ENCODE measurements at regions of chr19 and their contacts with region 1.

Region 1: GRCh38 chr19:33186431-33187182 is 7.5 kb upstream of the LRP3 start:
- DNase-seq: peak; percentile 34 to 51 (median 51)
- H3K4me3 ChIP-seq: peak overlapping the region in 3 of 7 experiments; percentile 13 to 40 (median 28)
- H3K27ac ChIP-seq: no peak overlapping the region
- H3K4me1 ChIP-seq: peaks cover 0 to 20% (median 10%) of the 10 kb centered on the region in 4 experiments
- H3K27me3 ChIP-seq: peaks cover 0 to 4% (median 0%) of the 10 kb centered on the region in 5 experiments

Region 2: GRCh38 chr19:33125929-33126388 is 60.6 kb before region 1 on chr19:
- CTCF ChIA-PET with region 1: interaction called, 27 read pairs
- POLR2A ChIA-PET with region 1: no interaction called
- DNase-seq: peak; percentile 60 to 81 (median 78)
- H3K4me3 ChIP-seq: no peak overlapping the region
- H3K27ac ChIP-seq: no peak overlapping the region
- H3K4me1 ChIP-seq: peaks cover 0 to 3% (median 0%) of the 10 kb centered on the region in 4 experiments
- H3K27me3 ChIP-seq: no peaks in the 10 kb centered on the region

Region 3: DNA sequence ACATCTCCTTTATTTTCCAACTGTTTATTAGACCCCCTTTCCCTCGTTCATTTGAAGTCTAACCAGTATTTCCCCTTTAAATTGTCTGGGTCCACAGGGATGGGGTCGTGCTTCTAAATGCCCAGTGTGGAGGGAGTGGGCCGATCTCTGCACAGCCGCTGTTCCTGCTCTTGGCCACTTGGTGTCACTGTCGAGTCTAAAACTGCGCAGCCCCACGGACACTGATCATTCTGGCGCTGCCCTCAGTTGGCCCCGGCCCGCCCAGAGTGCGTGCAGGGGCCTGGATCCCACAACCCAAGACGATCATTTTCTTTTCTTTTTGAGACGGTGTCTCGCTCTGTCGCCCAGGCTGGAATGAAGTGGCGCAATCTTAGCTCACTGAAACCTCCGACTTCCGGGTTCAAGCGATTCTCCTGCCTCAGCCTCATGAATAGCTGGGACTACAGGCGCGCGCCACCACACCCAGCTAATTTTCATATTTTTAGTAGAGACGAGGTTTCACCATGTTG is 42.7 kb before region 1 on chr19:
- CTCF ChIA-PET with region 1: interaction called, 40 read pairs
- POLR2A ChIA-PET with region 1: interaction called, 3 read pairs
- DNase-seq: peak; percentile 64 to 74 (median 73)
- H3K4me3 ChIP-seq: peak overlapping the region in 1 of 7 experiments; percentile 42
- H3K27ac ChIP-seq: no peak overlapping the region
- H3K4me1 ChIP-seq: peaks cover 0 to 4% (median 0%) of the 10 kb centered on the region in 4 experiments
- H3K27me3 ChIP-seq: peaks cover 0 to 1% (median 0%) of the 10 kb centered on the region in 5 experiments

Region 4: GRCh38 chr19:33260628-33261418 is 74.2 kb after region 1 on chr19:
- CTCF ChIA-PET with region 1: no interaction called
- POLR2A ChIA-PET with region 1: no interaction called
- DNase-seq: peak; percentile 87 to 98 (median 96)
- H3K4me3 ChIP-seq: peak overlapping the region in 4 of 7 experiments; percentile 3 to 30 (median 16)
- H3K27ac ChIP-seq: peak overlapping the region in 1 of 2 experiments; percentile 27
- H3K4me1 ChIP-seq: peaks cover 0 to 60% (median 48%) of the 10 kb centered on the region in 4 experiments
- H3K27me3 ChIP-seq: peaks cover 0 to 2% (median 0%) of the 10 kb centered on the region in 5 experiments

Region 5: DNA sequence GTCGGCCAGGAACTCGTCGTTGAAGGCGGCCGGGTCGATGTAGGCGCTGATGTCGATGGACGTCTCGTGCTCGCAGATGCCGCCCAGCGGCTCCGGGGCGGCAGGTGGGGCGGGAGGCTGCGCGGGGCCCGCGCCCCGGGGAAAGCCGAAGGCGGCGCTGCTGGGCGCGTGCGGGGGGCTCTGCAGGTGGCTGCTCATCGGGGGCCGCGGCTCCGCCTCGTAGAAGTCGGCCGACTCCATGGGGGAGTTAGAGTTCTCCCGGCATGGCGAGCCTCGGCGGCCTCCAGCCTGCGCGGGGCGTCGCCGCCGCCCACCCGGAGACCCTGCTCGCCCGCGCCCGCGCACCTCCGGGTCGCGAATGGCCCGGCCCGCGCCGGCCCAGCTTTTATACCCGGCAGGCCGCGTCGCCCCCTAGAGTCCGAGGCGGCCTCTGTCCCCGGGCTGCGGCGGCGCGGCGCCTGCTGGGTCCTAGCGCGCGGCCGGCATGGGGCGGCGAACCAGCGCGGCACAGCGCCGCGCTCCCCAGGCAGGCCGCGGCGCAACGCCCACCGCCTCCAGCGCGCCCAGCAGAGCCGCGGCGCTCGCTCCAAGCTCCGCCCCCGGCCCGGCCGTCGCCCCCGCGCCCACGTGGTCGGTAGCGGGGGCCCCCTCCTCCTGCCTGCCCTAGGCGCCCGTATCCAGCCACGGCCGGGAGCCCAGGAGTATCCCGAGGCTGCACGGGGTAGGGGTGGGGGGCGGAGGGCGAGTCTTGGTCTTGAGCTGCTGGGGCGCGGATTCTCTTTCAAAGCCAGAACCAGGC is 115.8 kb after region 1 on chr19 and contains the start of gene CEBPA:
- CTCF ChIA-PET with region 1: no interaction called
- POLR2A ChIA-PET with region 1: no interaction called
- DNase-seq: peak; percentile 90 to 95 (median 94)
- H3K4me3 ChIP-seq: peak within 1 kb of the TSS; percentile 50 to 89 (median 76)
- H3K27ac ChIP-seq: peak within 1 kb of the TSS in 1 of 2 experiments; percentile 61
- H3K4me1 ChIP-seq: peaks cover 5 to 69% (median 56%) of the 10 kb centered on the region in 4 experiments
- H3K27me3 ChIP-seq: no peaks in the 10 kb centered on the region